ENCODE measurements at regions of chr2 and their contacts with region 1.

Region 1: DNA sequence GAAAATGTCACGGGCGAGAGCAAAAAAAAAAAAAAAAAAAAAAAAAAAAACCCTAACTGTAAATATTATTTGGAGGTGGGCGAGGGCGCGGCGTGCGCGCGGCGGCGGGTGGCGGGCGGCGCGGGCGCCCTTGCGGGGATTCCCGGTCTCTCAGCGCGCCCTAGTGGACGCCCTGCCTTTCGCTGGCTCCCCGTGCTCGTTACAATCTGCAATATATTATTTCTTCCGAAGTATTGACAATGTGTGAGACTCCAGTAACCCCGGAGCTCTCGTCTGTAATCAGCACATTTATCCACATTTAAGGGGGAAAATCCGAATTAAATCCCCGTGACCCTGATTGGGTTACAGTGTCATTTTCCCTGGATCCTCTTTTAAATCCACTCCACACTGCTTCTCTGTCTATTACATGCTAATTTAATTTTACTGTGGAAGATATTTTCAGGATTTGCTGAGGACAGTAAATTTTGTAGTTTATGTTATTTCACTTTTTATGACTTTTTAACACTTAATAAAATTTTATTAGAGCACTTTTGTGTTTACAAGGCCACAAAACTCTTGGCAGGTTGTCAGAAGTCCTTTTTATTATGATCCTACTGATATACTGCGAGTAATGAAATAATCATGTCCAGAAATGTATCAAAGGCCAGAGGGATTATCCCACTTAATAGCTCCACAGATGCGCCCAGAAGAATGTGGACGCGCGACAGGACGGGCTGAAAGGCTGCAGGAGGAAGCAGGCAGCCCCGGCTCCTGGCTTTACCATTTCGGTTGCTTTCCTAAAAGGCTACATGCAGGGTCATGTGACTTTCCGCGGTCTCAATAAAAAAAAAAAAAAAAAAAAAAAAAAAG is 369.1 kb downstream of the MTX2 start:
- DNase-seq: peak; percentile 77
- H3K4me3 ChIP-seq: peak overlapping the region; percentile 69 to 81 (median 78)
- H3K27ac ChIP-seq: peak overlapping the region; percentile 80 to 85 (median 82)
- H3K4me1 ChIP-seq: peaks cover 0 to 9% (median 5%) of the 10 kb centered on the region in 4 donors
- H3K27me3 ChIP-seq: peaks cover 39% of the 10 kb centered on the region
- CTCF ChIP-seq: peak; percentile 35 to 78 (median 69)
- EP300 ChIP-seq: no peak
- POLR2A ChIP-seq: no peak

Region 2: GRCh38 chr2:176554101-176555048 is 84.0 kb before region 1 on chr2:
- in situ Hi-C with region 1: no loop called
- intact Hi-C with region 1: loop called (anchors 10 kb)
- DNase-seq: peak; percentile 25
- H3K4me3 ChIP-seq: peak overlapping the region; percentile 25 to 47 (median 37)
- H3K27ac ChIP-seq: peak overlapping the region; percentile 72 to 85 (median 76)
- H3K4me1 ChIP-seq: peaks cover 4 to 24% (median 9%) of the 10 kb centered on the region in 4 donors
- H3K27me3 ChIP-seq: no peaks in the 10 kb centered on the region
- CTCF ChIP-seq: peak; percentile 78 to 86 (median 82)
- EP300 ChIP-seq: no peak
- POLR2A ChIP-seq: no peak